Body of pancreas (tissue), 4 donors: ENCODE measurements at regions of chr5 and their contacts with region 1.

Region 1: GRCh38 chr5:73215891-73216610 is 43.1 kb downstream of the TMEM174 start:
- DNase-seq: peak; percentile 82 to 88 (median 83)
- ATAC-seq: peak; percentile 99
- H3K4me3 ChIP-seq: no peak overlapping the region
- H3K27ac ChIP-seq: peak overlapping the region in 2 of 4 donors; percentile 62 to 73
- H3K4me1 ChIP-seq: peaks cover 13% of the 10 kb centered on the region
- H3K27me3 ChIP-seq: no peaks in the 10 kb centered on the region
- CTCF ChIP-seq: peak; percentile 80 to 92 (median 90)
- POLR2A ChIP-seq: peak in 2 of 3 donors; percentile 25 to 63

Region 2: DNA sequence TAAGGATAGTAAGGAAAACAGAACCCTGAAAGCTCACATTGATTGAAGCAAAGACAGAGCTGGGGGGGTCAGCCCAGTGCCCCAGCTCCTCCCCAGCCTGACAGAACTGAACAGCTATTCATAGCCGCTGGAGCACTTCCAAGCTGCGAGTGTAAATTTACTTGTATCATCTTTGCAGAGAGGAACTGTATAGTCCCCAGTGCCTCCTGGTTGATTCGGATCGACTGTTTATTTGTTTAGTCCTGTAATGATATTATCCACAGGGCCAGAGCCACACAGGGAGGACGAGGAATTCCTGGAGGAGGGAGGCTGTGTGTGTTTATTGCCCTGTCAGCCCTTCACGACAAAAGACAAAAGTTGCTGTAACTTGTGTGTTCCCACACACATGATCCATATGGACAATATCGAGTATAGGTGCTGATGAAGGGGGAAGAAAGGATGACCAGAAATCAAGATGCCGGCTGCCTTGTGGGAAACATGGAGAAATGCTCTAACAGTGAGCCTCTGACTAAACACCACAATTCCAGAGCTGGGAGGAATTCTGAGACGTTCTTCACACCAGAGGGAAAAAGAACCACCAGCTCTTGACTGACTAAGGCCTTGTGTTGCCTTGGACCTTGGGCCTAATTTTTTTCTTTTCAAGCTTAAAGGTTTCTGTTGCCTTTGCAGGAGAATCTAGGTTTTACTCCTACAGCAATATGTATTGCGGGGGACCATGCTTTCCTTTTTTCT is 201.4 kb after region 1 on chr5:
- intact Hi-C with region 1: no loop called
- DNase-seq: no peak
- ATAC-seq: no peak
- H3K4me3 ChIP-seq: no peak overlapping the region
- H3K27ac ChIP-seq: no peak overlapping the region
- H3K4me1 ChIP-seq: peaks cover 11% of the 10 kb centered on the region
- H3K27me3 ChIP-seq: peaks cover 0 to 23% of the 10 kb centered on the region in 2 donors
- CTCF ChIP-seq: no peak
- POLR2A ChIP-seq: no peak

Region 3: DNA sequence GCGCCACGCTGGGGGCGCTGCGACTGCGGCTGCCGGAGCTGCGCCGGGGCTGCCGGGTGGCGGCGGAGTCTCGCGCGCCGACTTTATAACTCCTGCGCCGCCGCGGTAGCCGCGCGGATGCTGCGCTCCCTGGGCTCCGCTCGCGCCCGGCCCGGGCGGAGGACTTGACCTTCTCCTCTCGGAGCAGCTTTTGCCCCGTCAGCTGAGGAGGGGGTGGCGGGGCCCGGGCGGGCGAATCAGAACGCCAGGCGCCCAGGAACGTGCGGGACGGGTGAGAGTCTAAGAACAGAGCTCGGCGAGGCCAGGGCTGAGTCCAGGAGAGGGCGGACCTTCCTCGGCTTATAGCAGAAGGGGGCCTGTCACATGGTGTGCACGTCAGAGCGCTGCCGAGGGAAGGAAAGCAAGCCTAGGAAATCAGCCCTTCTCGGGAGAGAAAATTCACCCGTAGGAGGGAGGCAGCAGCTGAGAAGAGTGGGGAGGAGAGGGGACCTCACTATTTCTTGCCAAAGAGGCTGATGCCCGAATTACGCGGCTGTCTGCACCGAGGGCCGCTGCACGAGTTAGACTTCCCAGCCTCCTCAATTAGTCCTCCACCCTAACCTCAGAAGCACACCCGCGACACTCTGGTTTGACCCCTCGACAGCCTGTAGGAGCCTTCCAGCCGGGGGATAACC is 232.5 kb after region 1 on chr5 and contains the start of gene FOXD1:
- intact Hi-C with region 1: loop called (anchors 5 kb)
- DNase-seq: peak in 3 of 4 donors; percentile 34 to 60 (median 38)
- ATAC-seq: peak; percentile 41
- H3K4me3 ChIP-seq: no peak within 1 kb of the TSS
- H3K27ac ChIP-seq: no peak within 1 kb of the TSS
- H3K4me1 ChIP-seq: peaks cover 22% of the 10 kb centered on the region
- H3K27me3 ChIP-seq: peaks cover 9 to 65% of the 10 kb centered on the region in 2 donors
- CTCF ChIP-seq: no peak
- POLR2A ChIP-seq: no peak
- total RNA-seq, gene FOXD1: not detected

Region 4: GRCh38 chr5:74141053-74141452 is 925.0 kb after region 1 on chr5:
- intact Hi-C with region 1: no loop called
- DNase-seq: no peak
- ATAC-seq: no peak
- H3K4me3 ChIP-seq: no peak overlapping the region
- H3K27ac ChIP-seq: no peak overlapping the region
- H3K4me1 ChIP-seq: peaks cover 8% of the 10 kb centered on the region
- H3K27me3 ChIP-seq: no peaks in the 10 kb centered on the region
- CTCF ChIP-seq: no peak
- POLR2A ChIP-seq: no peak